A673 (cell line): ENCODE measurements at regions of chr2 and their contacts with region 1.

Region 1: GRCh38 chr2:201882353-201883090 is 76.2 kb downstream of the CDK15 start:
- DNase-seq: peak; percentile 96
- H3K4me3 ChIP-seq: peak overlapping the region; percentile 22
- H3K27ac ChIP-seq: peak overlapping the region; percentile 49
- H3K4me1 ChIP-seq: peaks cover 68% of the 10 kb centered on the region
- H3K27me3 ChIP-seq: peaks cover 3% of the 10 kb centered on the region
- CTCF ChIP-seq: no peak

Region 2: GRCh38 chr2:201908901-201909300 is 26.4 kb after region 1 on chr2:
- CTCF ChIA-PET with region 1: no interaction called
- POLR2A ChIA-PET with region 1: no interaction called
- intact Hi-C with region 1: no loop called
- DNase-seq: no peak
- H3K4me3 ChIP-seq: no peak overlapping the region
- H3K27ac ChIP-seq: no peak overlapping the region
- H3K4me1 ChIP-seq: no peaks in the 10 kb centered on the region
- H3K27me3 ChIP-seq: no peaks in the 10 kb centered on the region
- CTCF ChIP-seq: no peak

Region 3: DNA sequence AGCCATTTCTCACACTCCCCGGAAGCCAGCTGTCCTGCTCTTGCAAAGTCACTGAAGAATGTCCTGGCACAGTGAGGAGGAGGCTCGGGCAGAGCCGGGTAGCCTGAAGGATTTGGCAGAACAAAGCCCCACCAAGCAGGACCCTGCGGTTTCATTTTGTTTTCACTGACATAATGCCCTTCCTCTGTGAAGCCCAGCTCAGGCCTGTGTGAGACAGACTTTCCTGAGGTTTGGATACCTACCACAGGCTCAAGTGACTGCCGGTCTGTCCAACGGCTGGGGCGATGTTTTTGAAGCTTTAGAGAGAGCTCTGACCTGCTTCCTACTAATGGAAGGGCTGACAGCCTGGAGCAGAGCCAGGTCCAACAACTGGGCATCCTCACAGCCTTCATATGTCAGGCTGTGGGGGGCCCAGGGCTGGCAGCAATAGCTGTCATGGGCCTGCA is 51.3 kb after region 1 on chr2:
- CTCF ChIA-PET with region 1: no interaction called
- POLR2A ChIA-PET with region 1: no interaction called
- intact Hi-C with region 1: loop called (anchors 2 kb)
- DNase-seq: peak; percentile 55
- H3K4me3 ChIP-seq: no peak overlapping the region
- H3K27ac ChIP-seq: no peak overlapping the region
- H3K4me1 ChIP-seq: peaks cover 36% of the 10 kb centered on the region
- H3K27me3 ChIP-seq: peaks cover 74% of the 10 kb centered on the region
- CTCF ChIP-seq: no peak

Region 4: DNA sequence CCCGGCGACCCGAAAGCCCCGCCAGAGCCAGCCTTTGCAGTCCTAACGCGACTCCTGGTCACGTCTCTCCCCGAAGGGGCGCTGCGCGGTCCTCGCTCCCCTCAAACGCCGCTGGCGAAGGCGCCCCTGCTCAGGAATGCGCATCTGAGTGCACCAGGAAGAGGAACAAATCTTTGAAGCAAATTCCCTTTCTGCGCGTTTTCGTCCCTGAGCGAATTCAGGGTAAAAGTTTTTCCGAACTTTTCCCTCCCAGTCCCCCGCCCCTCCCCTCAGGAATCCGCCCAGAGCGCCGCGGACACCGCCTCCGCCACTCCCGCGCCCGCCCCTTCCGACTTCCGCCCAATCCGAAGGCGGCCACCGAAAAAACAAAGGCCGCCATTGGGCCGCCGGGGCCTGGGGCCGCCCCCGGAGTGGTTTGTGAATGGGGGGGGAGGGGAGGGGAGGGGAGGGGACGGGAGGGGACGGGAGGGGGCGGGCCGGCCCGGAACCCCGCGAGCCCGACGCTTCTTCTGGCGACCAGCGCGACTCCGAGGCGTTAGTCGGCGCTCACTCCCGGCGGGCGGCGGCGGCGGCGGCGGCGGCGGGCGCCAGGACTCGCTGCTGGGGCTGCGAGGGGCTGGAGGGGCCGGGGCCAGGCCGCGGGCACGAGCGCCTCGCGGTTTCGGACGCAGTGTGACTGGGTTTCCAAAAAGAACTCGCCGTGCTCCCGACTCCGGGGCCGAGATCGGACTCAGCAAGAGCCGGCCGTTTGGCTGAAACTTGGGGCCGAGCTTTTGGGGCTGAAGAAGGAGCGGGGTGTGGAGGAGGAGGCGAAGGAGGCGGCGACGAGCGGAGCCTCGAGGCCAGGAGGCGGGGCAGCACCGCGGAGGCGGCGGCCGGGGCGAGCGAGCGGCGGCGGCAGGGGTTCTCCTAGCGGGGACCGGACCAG is 151.1 kb after region 1 on chr2 and contains the start of gene FZD7:
- CTCF ChIA-PET with region 1: no interaction called
- POLR2A ChIA-PET with region 1: no interaction called
- intact Hi-C with region 1: loop called (anchors 5 kb)
- DNase-seq: peak; percentile 97
- H3K4me3 ChIP-seq: peak within 1 kb of the TSS; percentile 85
- H3K27ac ChIP-seq: peak within 1 kb of the TSS; percentile 95
- H3K4me1 ChIP-seq: peaks cover 38% of the 10 kb centered on the region
- H3K27me3 ChIP-seq: no peaks in the 10 kb centered on the region
- CTCF ChIP-seq: peak; percentile 28
- total RNA-seq, gene FZD7: 14.1 and 15.1 TPM in 2 replicates